Right cardiac atrium (tissue), 5 donors: ENCODE measurements at regions of chr4 and their contacts with region 1.

Region 1: GRCh38 chr4:185597532-185598188 is 62.4 kb upstream of the PDLIM3 start:
- DNase-seq: peak; percentile 75 to 89 (median 87)
- ATAC-seq: peak; percentile 55 to 58
- H3K4me3 ChIP-seq: no peak overlapping the region
- H3K27ac ChIP-seq: no peak overlapping the region
- H3K4me1 ChIP-seq: no peaks in the 10 kb centered on the region
- H3K27me3 ChIP-seq: no peaks in the 10 kb centered on the region

Region 2: DNA sequence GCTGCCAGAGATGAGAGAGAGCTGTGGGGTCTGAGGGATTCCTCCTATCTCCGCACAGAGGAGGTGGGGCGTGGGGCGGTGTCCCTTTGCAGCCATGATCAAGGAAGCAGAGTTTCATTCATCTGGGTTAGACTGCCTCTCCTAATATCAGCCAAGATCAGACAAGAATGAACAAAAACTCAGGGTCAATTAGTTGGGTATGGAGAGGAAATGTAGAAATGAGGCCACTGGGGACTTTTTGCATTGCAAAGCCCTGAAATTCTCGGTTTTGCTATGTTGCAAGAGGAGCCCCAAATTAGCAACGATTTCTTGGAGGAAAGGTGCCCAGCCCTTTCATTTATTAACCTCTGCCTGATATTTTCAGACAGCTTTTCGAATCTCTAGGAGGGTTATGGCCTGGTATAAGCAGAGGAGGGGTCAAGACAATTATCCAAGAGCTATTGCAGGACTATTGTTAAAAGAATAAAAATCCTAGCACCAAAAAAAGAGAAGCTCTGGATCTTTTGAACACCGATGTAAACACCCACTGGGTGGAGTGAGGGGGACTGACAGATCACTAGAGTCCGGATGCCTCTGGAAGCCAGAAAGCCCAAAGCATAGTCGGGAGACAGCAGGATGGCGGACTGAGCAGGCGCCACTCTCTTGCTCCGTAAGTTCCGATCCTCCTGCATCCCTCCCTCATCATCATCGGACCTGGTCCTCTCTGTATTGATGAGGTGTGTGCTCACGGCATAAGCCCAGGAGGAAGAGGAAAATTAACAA is 737.5 kb before region 1 on chr4:
- intact Hi-C with region 1: no loop called
- DNase-seq: no peak
- ATAC-seq: no peak
- H3K4me3 ChIP-seq: no peak overlapping the region
- H3K27ac ChIP-seq: no peak overlapping the region
- H3K4me1 ChIP-seq: peaks cover 1% of the 10 kb centered on the region
- H3K27me3 ChIP-seq: no peaks in the 10 kb centered on the region

Region 3: GRCh38 chr4:185437809-185438208 is 159.9 kb before region 1 on chr4:
- intact Hi-C with region 1: no loop called
- DNase-seq: no peak
- ATAC-seq: no peak
- H3K4me3 ChIP-seq: no peak overlapping the region
- H3K27ac ChIP-seq: no peak overlapping the region
- H3K4me1 ChIP-seq: no peaks in the 10 kb centered on the region
- H3K27me3 ChIP-seq: no peaks in the 10 kb centered on the region

Region 4: GRCh38 chr4:185457136-185457535 is 140.5 kb before region 1 on chr4:
- intact Hi-C with region 1: no loop called
- DNase-seq: no peak
- ATAC-seq: no peak
- H3K4me3 ChIP-seq: no peak overlapping the region
- H3K27ac ChIP-seq: no peak overlapping the region
- H3K4me1 ChIP-seq: no peaks in the 10 kb centered on the region
- H3K27me3 ChIP-seq: no peaks in the 10 kb centered on the region

Region 5: GRCh38 chr4:185471235-185472102 is 126.2 kb before region 1 on chr4 and contains the start of gene CCDC110:
- intact Hi-C with region 1: loop called in 3 of 4 experiments (anchors 5 kb)
- DNase-seq: peak; percentile 94 to 98 (median 97)
- ATAC-seq: peak; percentile 98 to 99
- H3K4me3 ChIP-seq: peak within 1 kb of the TSS; percentile 98
- H3K27ac ChIP-seq: no peak within 1 kb of the TSS
- H3K4me1 ChIP-seq: no peaks in the 10 kb centered on the region
- H3K27me3 ChIP-seq: no peaks in the 10 kb centered on the region
- total RNA-seq, gene CCDC110: 1.4 to 3.7 (median 2.8) TPM

Region 6: GRCh38 chr4:185513489-185514181 is 84.0 kb before region 1 on chr4:
- intact Hi-C with region 1: loop called in 1 of 4 experiments (anchors 10 kb)
- DNase-seq: peak in 1 of 3 donors; percentile 55
- ATAC-seq: peak; percentile 77 to 84
- H3K4me3 ChIP-seq: no peak overlapping the region
- H3K27ac ChIP-seq: peak overlapping the region; percentile 45
- H3K4me1 ChIP-seq: peaks cover 11% of the 10 kb centered on the region
- H3K27me3 ChIP-seq: no peaks in the 10 kb centered on the region

Region 7: GRCh38 chr4:185534866-185535611 is 62.6 kb before region 1 on chr4 and contains the start of gene PDLIM3:
- intact Hi-C with region 1: loop called in 2 of 4 experiments (anchors 5 to 10 kb)
- DNase-seq: peak; percentile 83 to 94 (median 92)
- ATAC-seq: peak; percentile 89 to 90
- H3K4me3 ChIP-seq: peak within 1 kb of the TSS; percentile 99
- H3K27ac ChIP-seq: peak within 1 kb of the TSS; percentile 99
- H3K4me1 ChIP-seq: peaks cover 2% of the 10 kb centered on the region
- H3K27me3 ChIP-seq: no peaks in the 10 kb centered on the region
- total RNA-seq, gene PDLIM3: 267 to 965 (median 293) TPM

Region 8: GRCh38 chr4:185554365-185555126 is 43.1 kb before region 1 on chr4:
- intact Hi-C with region 1: no loop called
- DNase-seq: no peak
- ATAC-seq: peak; percentile 77 to 95
- H3K4me3 ChIP-seq: no peak overlapping the region
- H3K27ac ChIP-seq: no peak overlapping the region
- H3K4me1 ChIP-seq: no peaks in the 10 kb centered on the region
- H3K27me3 ChIP-seq: no peaks in the 10 kb centered on the region